ENCODE measurements at regions of chr6 and their contacts with region 1.

Region 1: DNA sequence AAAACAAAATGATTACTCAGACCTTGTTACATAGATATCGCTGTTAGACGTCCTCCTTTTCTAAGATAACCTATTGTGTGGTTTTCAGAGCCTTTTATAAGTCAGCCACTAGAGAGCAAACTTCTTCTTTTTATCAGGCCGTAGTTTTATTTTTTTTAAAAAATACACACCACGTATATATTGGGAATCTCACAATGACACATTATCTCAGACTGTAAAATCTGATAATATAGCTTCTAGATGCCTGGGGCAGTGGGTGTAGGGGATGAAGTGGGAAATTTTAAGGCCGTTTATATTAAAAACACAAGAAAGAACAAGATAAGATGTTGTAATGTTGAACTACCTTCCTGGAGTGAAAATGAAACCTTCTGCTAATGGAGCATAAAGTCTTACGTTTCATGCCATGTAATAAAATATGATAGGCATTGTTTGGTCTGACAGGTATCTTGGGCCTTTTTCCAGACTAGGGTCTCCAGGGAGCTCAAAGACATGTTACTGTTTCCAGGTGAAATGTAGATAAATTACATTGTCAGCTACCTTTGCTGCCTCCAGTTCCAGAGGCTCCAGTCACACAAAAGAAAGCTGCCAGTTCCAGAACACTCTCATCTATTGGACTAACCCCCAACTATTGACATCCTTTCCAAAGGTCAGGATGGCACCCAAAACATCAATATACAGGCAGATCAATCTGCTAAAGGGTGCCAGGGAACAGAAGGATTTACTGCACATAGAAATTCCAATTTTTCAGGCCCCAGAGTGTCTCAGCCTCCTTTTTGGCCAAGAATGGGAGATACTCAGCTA is 130.2 kb upstream of the AKIRIN2 start:
- DNase-seq: peak; percentile 84
- H3K4me3 ChIP-seq: peak overlapping the region; percentile 42
- H3K27ac ChIP-seq: peak overlapping the region; percentile 81
- H3K4me1 ChIP-seq: peaks cover 68% of the 10 kb centered on the region
- CTCF ChIP-seq: peak; percentile 98

Region 2: GRCh38 chr6:87799651-87800050 is 32.6 kb before region 1 on chr6:
- CTCF ChIA-PET with region 1: interaction called, 3 read pairs
- POLR2A ChIA-PET with region 1: interaction called, 43 read pairs
- intact Hi-C with region 1: loop called (anchors 1 kb)
- DNase-seq: peak; percentile 80
- H3K4me3 ChIP-seq: peak overlapping the region; percentile 66
- H3K27ac ChIP-seq: peak overlapping the region; percentile 91
- H3K4me1 ChIP-seq: peaks cover 94% of the 10 kb centered on the region
- CTCF ChIP-seq: no peak

Region 3: GRCh38 chr6:87879132-87879861 is 47.1 kb after region 1 on chr6:
- CTCF ChIA-PET with region 1: no interaction called
- POLR2A ChIA-PET with region 1: interaction called, 25 read pairs
- intact Hi-C with region 1: loop called (anchors 1 kb)
- DNase-seq: peak; percentile 100
- H3K4me3 ChIP-seq: peak overlapping the region; percentile 11
- H3K27ac ChIP-seq: peak overlapping the region; percentile 99
- H3K4me1 ChIP-seq: peaks cover 78% of the 10 kb centered on the region
- CTCF ChIP-seq: no peak

Region 4: GRCh38 chr6:87922947-87923330 is 90.7 kb after region 1 on chr6:
- CTCF ChIA-PET with region 1: interaction called, 7 read pairs
- POLR2A ChIA-PET with region 1: interaction called, 122 read pairs
- intact Hi-C with region 1: loop called (anchors 1 kb)
- DNase-seq: peak; percentile 98
- H3K4me3 ChIP-seq: peak overlapping the region; percentile 31
- H3K27ac ChIP-seq: peak overlapping the region; percentile 99
- H3K4me1 ChIP-seq: peaks cover 99% of the 10 kb centered on the region
- CTCF ChIP-seq: no peak

Region 5: GRCh38 chr6:88165844-88166492 is 333.7 kb after region 1 on chr6 and contains the start of gene CNR1:
- CTCF ChIA-PET with region 1: interaction called, 3 read pairs
- POLR2A ChIA-PET with region 1: interaction called, 24 read pairs
- intact Hi-C with region 1: loop called (anchors 2 kb)
- DNase-seq: peak; percentile 83
- H3K4me3 ChIP-seq: peak within 1 kb of the TSS; percentile 97
- H3K27ac ChIP-seq: peak within 1 kb of the TSS; percentile 80
- H3K4me1 ChIP-seq: peaks cover 45% of the 10 kb centered on the region
- CTCF ChIP-seq: peak; percentile 36; the same call in 1 of the 2 replicates
- total RNA-seq, gene CNR1: 109 and 150 TPM in 2 replicates

Region 6: GRCh38 chr6:88780714-88781389 is 948.6 kb after region 1 on chr6:
- CTCF ChIA-PET with region 1: no interaction called
- POLR2A ChIA-PET with region 1: interaction called, 3 read pairs
- intact Hi-C with region 1: loop called (anchors 5 kb)
- DNase-seq: peak; percentile 89
- H3K4me3 ChIP-seq: no peak overlapping the region
- H3K27ac ChIP-seq: no peak overlapping the region
- H3K4me1 ChIP-seq: peaks cover 16% of the 10 kb centered on the region
- CTCF ChIP-seq: peak; percentile 98